Activated CD4-positive, alpha-beta T cell treated with anti-CD3 and anti-CD28 coated beads for 36 hours (primary cell): ENCODE measurements at regions of chr3 and their contacts with region 1.

Region 1: DNA sequence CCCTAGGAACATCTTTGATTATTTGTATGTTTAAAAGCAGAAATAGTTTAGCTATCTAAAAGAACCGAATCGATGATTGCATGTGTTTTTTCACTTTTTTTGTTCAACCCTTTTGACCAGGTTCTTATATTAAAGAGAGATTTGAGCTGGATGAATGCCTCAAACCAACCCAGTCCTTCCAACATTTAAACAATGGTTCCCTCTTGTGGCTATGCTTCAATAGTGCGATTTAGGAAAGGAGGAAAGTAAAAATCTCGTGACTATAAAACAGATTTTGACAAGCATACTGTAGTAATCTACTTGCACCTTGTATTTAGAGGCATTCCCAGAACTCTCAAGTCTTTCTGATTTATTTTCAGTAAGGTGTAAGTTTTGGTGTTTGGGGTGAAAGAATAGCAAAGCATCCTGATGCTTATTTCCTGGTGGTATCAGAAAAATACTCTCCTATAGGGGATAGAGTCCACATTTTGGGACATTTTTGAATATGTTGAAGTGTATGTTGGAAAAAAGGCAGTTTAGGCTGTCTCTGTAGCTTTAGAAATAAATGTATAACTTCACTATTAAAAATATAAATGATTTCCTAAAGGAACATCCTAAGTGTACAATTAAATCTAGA is 159.6 kb upstream of the KCNH8 start:
- DNase-seq: no peak
- ATAC-seq: peak; percentile 59
- H3K4me3 Mint-ChIP-seq: peak overlapping the region; percentile 73
- H3K27ac Mint-ChIP-seq: peak overlapping the region; percentile 96
- H3K4me1 Mint-ChIP-seq: peaks cover 35% of the 10 kb centered on the region
- H3K27me3 Mint-ChIP-seq: peaks cover 9% of the 10 kb centered on the region

Region 2: GRCh38 chr3:18438586-18438985 is 550.1 kb before region 1 on chr3:
- CTCF ChIA-PET with region 1: interaction called, 4 read pairs
- POLR2A ChIA-PET with region 1: no interaction called
- intact Hi-C with region 1: loop called in 1 of 2 experiments (anchors 5 kb)
- DNase-seq: peak; percentile 84
- ATAC-seq: peak; percentile 81
- H3K4me3 Mint-ChIP-seq: peak overlapping the region; percentile 79
- H3K27ac Mint-ChIP-seq: peak overlapping the region; percentile 96
- H3K4me1 Mint-ChIP-seq: peaks cover 14% of the 10 kb centered on the region
- H3K27me3 Mint-ChIP-seq: no peaks in the 10 kb centered on the region

Region 3: DNA sequence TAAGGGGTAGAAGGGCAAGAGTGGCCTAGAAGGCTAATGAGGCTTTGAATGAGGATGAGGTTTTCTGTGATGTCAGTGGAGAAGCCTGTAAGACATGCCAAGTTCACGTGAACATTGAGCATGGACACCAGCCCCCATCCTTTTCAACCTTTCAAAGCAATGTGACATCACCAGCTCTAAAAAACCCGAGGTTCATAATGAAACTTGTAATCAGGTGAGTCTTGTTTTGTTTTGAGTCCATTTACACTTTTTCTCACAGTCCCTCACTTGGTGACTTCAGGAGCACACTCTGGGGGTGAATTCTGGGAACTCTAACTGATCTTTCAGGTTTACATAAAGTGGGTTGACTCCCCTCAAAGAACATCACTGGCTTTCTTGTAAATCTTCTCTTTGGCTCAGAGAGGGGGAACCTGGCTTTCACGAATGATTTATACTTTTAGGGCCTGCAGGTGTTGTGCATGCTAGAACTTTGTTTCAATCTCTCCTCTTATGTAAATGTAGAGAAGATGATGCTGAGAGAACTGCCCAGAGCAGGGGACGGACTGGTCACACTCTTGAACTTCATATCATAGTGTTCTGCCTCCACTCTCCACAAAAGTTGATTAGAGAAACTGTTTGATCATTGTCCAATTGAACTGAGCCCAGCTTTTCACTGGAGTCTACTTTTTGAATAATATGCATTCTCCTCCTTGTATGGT is 338.9 kb before region 1 on chr3:
- CTCF ChIA-PET with region 1: no interaction called
- POLR2A ChIA-PET with region 1: no interaction called
- intact Hi-C with region 1: loop called (anchors 5 kb)
- DNase-seq: peak; percentile 80
- ATAC-seq: peak; percentile 79
- H3K4me3 Mint-ChIP-seq: peak overlapping the region; percentile 34
- H3K27ac Mint-ChIP-seq: peak overlapping the region; percentile 98
- H3K4me1 Mint-ChIP-seq: peaks cover 84% of the 10 kb centered on the region
- H3K27me3 Mint-ChIP-seq: no peaks in the 10 kb centered on the region

Region 4: DNA sequence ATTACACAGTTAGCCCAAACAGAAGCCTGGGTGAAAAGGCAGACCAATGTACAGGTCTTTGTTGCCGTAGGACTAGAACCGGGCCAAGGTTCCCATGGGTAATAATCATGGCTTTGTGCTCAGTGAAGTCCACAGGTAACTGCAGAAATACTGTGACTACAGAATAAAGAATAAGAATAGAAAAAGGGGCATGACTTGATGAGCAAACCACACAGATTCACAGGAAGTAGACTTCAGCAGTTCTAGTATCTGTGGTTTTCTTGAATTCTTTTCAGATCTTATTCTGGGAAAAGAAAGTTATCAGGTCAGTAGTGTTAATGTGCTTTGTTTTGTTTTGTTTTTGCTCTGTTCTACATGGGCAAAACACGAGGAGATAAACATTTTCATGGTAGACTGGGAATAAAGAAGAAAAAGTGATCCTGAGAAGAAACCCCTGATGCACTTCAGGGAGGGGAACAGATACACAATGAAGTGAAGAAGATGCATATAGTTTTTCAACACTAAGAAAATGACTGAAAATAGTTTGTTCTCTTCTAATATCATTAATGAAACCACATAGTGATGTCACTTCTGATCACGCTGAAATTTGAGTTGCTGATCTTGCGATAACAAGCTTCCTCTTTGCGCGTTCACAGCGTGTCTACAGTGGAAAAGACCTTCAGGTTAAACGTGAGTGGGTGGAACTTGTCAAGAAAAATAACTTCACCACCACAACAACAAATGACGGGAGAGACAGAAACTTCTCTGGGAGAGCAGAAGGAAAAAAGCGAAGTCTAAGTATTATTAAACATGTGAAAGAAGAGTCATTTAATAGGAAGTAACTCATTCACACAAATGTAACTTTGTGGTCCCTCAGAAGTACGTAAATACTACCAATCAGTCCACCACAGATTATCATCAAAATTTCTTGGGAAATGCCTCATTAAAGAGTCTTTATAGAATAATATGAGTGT is 247.8 kb before region 1 on chr3:
- CTCF ChIA-PET with region 1: interaction called, 3 read pairs
- POLR2A ChIA-PET with region 1: interaction called, 5 read pairs
- intact Hi-C with region 1: loop called (anchors 2 kb)
- DNase-seq: peak; percentile 76
- ATAC-seq: peak; percentile 36
- H3K4me3 Mint-ChIP-seq: peak overlapping the region; percentile 58
- H3K27ac Mint-ChIP-seq: peak overlapping the region; percentile 94
- H3K4me1 Mint-ChIP-seq: peaks cover 94% of the 10 kb centered on the region
- H3K27me3 Mint-ChIP-seq: no peaks in the 10 kb centered on the region

Region 5: DNA sequence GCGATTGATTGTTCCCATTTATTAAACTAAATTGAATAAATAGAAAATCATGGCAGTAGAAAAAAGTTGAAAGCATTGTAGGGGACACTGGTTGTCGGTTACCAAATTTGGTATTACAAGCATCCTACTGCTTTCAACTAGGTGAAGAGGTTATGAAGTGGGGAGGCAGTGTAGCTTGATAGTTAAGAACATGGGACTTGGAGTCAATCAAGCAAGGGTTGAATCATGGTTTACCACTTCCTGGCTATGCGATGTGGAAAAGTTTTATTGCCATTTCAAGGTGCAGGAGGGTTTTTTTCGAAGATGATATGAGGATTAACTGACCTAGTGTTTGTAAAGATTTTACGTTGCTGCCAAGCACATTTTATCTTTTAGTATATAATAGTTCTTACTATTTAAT is 158.6 kb before region 1 on chr3:
- CTCF ChIA-PET with region 1: interaction called, 12 read pairs
- POLR2A ChIA-PET with region 1: no interaction called
- intact Hi-C with region 1: no loop called
- DNase-seq: peak; percentile 39
- ATAC-seq: peak; percentile 75
- H3K4me3 Mint-ChIP-seq: no peak overlapping the region
- H3K27ac Mint-ChIP-seq: no peak overlapping the region
- H3K4me1 Mint-ChIP-seq: peaks cover 30% of the 10 kb centered on the region
- H3K27me3 Mint-ChIP-seq: no peaks in the 10 kb centered on the region

Region 6: GRCh38 chr3:18872466-18872865 is 116.3 kb before region 1 on chr3:
- CTCF ChIA-PET with region 1: interaction called, 15 read pairs
- POLR2A ChIA-PET with region 1: interaction called, 6 read pairs
- intact Hi-C with region 1: loop called (anchors 1 to 2 kb)
- DNase-seq: no peak
- ATAC-seq: peak; percentile 43
- H3K4me3 Mint-ChIP-seq: no peak overlapping the region
- H3K27ac Mint-ChIP-seq: peak overlapping the region; percentile 20
- H3K4me1 Mint-ChIP-seq: peaks cover 67% of the 10 kb centered on the region
- H3K27me3 Mint-ChIP-seq: peaks cover 2% of the 10 kb centered on the region

Region 7: DNA sequence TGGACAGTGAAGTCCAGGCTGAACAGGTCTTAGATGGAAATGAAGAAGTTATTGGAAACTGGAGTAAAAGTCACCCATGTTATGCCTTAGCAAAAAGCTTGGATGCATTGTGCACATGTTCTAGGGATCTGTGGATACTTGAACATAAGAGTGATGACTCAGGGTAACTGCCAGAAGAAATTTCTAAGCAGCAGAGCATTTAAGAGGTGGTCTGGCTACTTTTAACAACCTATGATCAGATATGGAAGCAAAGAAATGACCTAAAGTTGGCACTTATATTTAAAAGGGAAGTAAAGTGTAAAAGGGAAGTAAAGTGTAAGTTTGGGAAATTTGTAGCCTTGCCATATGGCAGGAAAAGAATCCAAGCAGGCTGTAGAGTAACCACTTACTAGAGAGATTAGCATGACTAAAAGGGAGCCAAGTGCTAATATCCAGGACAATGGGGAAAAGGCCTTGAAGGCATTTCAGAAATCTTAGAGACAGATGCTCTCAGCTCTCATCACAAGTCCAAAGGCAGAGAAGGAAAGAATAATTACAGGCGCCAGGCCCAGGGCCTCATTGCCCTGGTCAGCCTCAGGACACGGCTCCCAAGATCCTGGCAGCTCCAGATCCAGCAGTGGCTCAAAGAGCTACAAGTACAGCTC is 85.7 kb after region 1 on chr3:
- CTCF ChIA-PET with region 1: no interaction called
- POLR2A ChIA-PET with region 1: no interaction called
- intact Hi-C with region 1: no loop called
- DNase-seq: no peak
- ATAC-seq: no peak
- H3K4me3 Mint-ChIP-seq: no peak overlapping the region
- H3K27ac Mint-ChIP-seq: no peak overlapping the region
- H3K4me1 Mint-ChIP-seq: no peaks in the 10 kb centered on the region
- H3K27me3 Mint-ChIP-seq: no peaks in the 10 kb centered on the region

Region 8: GRCh38 chr3:19331931-19332330 is 343.2 kb after region 1 on chr3:
- CTCF ChIA-PET with region 1: no interaction called
- POLR2A ChIA-PET with region 1: no interaction called
- intact Hi-C with region 1: no loop called
- DNase-seq: no peak
- ATAC-seq: no peak
- H3K4me3 Mint-ChIP-seq: no peak overlapping the region
- H3K27ac Mint-ChIP-seq: no peak overlapping the region
- H3K4me1 Mint-ChIP-seq: no peaks in the 10 kb centered on the region
- H3K27me3 Mint-ChIP-seq: no peaks in the 10 kb centered on the region